Ascending aorta (tissue), 2 donors: ENCODE measurements at regions of chr2 and their contacts with region 1.

Region 1: DNA sequence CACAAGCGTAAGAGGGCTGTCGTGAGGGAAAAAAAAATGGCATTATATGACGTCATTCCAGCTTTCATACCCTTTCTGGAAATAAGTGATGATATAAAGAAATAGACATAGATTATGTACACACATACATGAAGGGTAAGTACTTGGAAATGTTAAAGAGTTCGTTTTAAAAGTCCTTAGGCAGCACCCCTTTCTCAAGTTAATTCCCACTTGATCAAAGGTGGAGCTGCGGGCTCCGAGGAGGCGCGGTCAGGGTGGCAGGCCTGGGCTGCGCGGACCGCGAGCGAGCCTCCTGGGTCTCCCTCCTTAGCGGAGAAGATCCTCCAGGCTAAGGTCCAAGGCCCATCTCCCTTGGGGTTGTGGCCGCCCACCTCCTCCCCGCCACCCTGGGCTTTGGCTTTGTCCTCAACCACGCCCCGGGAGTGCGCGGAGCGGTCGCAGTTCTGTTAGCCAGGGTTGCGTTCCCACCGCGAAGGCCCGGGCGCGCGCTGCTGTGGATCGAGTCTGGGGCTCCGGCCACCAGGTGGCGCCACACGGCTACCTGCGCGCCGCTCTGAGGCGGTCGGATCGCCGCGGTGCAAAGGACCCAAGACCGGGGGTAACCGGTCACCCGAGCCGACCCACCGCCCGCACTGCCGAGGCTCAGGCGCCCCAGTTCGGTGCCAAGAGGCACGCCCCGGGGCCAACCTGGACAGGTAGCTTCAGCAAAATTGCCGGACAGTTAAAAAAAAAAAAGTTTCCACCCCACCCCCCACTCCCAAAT is 66.8 kb downstream of the HNRNPLL start:
- DNase-seq: peak in 1 of 2 donors; percentile 86
- H3K4me3 ChIP-seq: peak overlapping the region; percentile 52 to 66
- H3K27ac ChIP-seq: no peak overlapping the region
- H3K4me1 ChIP-seq: peaks cover 0 to 3% of the 10 kb centered on the region in 2 donors
- H3K27me3 ChIP-seq: no peaks in the 10 kb centered on the region
- CTCF ChIP-seq: peak; percentile 87 to 93 (median 91)

Region 2: DNA sequence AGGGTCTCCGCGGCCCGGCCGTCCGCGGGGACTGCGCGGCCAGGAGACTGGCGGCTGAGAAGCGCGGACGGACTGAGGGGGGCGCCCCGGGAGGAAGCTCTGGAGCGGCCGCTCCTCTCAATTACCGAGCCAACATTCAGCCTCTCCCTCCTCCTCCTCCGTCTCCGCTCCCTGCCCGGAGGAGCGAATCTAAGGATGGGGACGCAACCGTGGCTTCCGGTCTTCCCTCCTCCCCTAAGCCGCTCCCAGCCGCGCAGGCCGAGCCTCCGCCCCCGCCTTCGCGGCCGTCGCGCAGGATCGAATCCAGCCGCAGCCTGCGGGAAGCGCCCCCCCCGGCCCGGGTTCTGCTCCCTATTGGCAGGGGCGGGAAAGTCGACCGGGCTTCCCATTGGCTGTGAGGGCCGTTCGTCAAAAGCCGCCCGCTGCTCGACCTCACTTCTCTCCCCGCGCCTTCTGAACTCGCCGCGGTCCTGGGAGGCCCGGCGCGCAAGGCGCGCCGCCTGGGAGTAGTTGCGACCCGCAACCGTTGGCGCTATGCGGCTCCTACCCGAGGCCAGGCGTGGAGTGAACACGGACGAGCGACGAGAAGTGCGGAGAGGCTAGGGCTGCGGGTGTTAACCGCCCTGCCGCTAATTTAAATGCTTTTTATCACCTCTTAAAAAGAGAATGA is 66.9 kb after region 1 on chr2 and contains the start of gene HNRNPLL:
- intact Hi-C with region 1: loop called (anchors 5 kb)
- DNase-seq: peak; percentile 91 to 98
- H3K4me3 ChIP-seq: peak within 1 kb of the TSS; percentile 90 to 91
- H3K27ac ChIP-seq: peak within 1 kb of the TSS; percentile 96 to 99
- H3K4me1 ChIP-seq: peaks cover 4 to 29% of the 10 kb centered on the region in 2 donors
- H3K27me3 ChIP-seq: no peaks in the 10 kb centered on the region
- CTCF ChIP-seq: no peak
- total RNA-seq, gene HNRNPLL: 10.6 TPM

Region 3: DNA sequence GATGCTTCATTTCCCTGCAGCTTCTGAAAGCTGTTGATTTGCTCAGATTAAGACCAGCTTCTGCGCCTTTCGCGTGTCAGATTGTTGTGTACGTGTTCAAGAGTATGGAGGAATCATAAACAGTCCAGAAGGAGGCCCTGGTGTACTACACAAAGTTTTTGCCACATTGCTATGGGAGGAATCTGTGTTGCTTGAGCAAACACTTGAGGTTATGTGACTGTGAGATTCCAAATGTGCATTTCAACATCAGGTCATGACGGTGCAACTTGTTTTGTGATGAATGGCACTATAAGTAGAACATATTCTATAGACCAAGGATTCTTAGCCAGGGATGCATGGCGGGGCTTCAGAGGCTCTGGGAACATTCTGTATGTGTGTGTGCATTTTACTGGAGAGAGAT is 180.3 kb after region 1 on chr2:
- intact Hi-C with region 1: no loop called
- DNase-seq: no peak
- H3K4me3 ChIP-seq: no peak overlapping the region
- H3K27ac ChIP-seq: no peak overlapping the region
- H3K4me1 ChIP-seq: peaks cover 0 to 7% of the 10 kb centered on the region in 2 donors
- H3K27me3 ChIP-seq: no peaks in the 10 kb centered on the region
- CTCF ChIP-seq: no peak